ENCODE measurements at regions of chr12 and their contacts with region 1.

Region 1: DNA sequence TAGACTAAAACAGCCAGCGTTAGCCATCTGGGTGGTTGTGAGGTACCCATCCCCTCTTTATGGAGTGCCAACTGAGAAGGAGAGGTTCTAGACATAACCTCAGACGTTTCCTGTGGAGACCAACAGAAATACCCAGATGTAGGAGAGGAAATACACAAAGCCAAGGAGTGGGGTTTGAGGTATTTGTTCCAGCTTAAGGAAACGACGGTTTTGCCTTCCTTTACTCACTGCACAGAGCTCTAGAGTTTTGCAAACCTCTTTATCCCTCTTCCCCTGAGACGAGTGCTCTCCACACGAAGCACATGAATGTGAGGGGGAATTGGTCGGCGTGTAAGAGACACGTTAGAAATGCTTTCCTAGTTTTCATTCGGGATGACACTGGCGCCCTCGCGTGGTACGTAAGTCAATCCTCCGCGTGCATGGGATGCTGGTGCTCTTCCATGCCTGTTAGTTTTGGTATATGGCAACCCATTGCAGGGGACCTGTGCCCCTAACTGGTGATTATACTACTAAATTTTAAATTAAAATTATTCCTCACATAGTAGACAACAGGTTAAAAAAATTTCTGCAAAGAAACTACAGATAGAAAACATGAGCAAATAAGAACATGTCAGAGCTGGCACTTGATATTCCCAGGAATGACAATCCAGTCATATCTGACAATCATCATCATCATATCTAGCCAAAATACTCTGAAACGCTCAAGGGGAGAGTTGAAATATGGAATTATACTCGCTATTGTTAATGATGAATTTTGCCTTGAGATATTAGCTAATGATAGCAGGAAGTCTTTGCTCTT is 121.7 kb downstream of the PPM1H start:
- DNase-seq: peak; percentile 38
- H3K4me3 ChIP-seq: peak overlapping the region; percentile 2; the same call in 1 of the 2 replicates
- H3K27ac ChIP-seq: no peak overlapping the region
- H3K27me3 ChIP-seq: peaks cover 5% of the 10 kb centered on the region
- CTCF ChIP-seq: peak; percentile 84

Region 2: GRCh38 chr12:62581288-62582064 is 231.8 kb before region 1 on chr12:
- CTCF ChIA-PET with region 1: interaction called, 48 read pairs
- POLR2A ChIA-PET with region 1: no interaction called
- DNase-seq: peak; percentile 20
- H3K4me3 ChIP-seq: no peak overlapping the region
- H3K27ac ChIP-seq: no peak overlapping the region
- H3K27me3 ChIP-seq: no peaks in the 10 kb centered on the region
- CTCF ChIP-seq: peak; percentile 77

Region 3: DNA sequence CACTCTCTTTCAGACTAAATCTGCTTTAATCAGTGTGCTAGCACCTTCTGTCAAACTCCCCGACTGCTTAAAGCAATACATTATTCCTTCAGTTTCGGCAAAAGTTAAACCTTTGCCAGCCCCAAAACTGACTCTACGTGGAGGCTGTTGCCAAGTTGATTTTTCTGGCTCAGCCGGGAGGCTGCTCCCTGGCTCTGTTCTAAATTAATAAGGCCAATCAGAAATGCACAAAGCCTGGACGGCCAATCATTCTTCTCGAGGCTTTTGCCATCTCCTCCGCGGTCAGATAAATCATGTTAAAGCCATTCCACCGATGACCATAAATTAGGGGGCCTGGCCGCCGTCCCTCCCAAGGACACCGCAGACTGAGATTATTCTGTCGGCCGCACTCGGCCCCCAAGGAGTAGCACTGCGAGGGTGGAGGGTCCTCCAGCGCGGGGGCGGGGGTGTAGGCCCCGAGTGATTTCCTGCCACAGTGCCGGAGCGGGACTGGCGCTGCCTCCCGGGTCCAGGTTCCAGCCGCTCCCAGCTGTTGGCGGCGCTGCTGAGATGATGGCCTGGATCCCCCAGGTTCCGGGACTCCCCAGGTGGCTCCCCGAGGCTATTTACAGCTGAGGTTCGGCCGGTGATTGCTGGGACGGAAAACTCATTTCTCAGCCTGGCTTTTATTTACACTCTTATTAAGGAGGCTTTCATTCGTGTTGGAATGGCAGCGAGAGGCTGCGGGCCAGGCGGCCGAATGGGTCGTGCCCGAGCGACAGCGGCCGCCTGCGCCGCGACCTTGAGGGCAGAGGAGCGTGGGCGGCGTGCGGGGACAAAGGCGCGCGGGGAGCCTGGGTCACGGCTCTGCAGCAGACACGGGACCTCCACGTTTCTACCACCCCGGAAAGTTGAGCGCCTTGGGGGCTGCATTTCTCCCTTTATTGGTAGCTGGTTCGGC is 181.5 kb before region 1 on chr12:
- CTCF ChIA-PET with region 1: no interaction called
- POLR2A ChIA-PET with region 1: no interaction called
- DNase-seq: peak; percentile 21
- H3K4me3 ChIP-seq: peak overlapping the region; percentile 62
- H3K27ac ChIP-seq: no peak overlapping the region
- H3K27me3 ChIP-seq: peaks cover 2% of the 10 kb centered on the region
- CTCF ChIP-seq: peak; percentile 40

Region 4: GRCh38 chr12:62793256-62794217 is 19.7 kb before region 1 on chr12:
- CTCF ChIA-PET with region 1: interaction called, 26 read pairs
- POLR2A ChIA-PET with region 1: no interaction called
- DNase-seq: peak; percentile 66
- H3K4me3 ChIP-seq: no peak overlapping the region
- H3K27ac ChIP-seq: no peak overlapping the region
- H3K27me3 ChIP-seq: no peaks in the 10 kb centered on the region
- CTCF ChIP-seq: peak; percentile 96

Region 5: DNA sequence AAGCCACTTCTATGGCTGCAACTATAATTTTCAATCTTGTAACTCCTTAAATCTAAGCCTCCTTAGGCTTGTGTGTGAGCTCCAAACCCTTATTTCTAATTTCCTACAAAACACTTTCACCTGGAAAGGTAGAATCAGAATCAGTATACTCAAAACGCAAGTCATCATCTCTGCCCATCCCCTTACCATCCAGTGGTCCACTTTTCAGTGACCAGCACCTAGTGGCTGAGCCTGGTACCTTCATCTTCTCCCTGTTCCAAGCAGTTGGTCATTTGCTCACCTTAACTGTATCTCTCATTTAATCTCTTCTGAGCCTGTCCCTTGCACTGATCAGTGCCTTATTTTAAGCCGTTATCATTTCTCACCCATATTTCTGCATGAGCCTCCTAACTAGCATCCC is 13.8 kb after region 1 on chr12:
- CTCF ChIA-PET with region 1: interaction called, 13 read pairs
- POLR2A ChIA-PET with region 1: no interaction called
- DNase-seq: no peak
- H3K4me3 ChIP-seq: no peak overlapping the region
- H3K27ac ChIP-seq: no peak overlapping the region
- H3K27me3 ChIP-seq: peaks cover 8% of the 10 kb centered on the region
- CTCF ChIP-seq: peak; percentile 31

Region 6: GRCh38 chr12:62848421-62848820 is 35.2 kb after region 1 on chr12:
- CTCF ChIA-PET with region 1: interaction called, 13 read pairs
- POLR2A ChIA-PET with region 1: no interaction called
- DNase-seq: no peak
- H3K4me3 ChIP-seq: no peak overlapping the region
- H3K27ac ChIP-seq: peak overlapping the region; percentile 22
- H3K27me3 ChIP-seq: no peaks in the 10 kb centered on the region
- CTCF ChIP-seq: no peak

Region 7: GRCh38 chr12:63068857-63069442 is 255.7 kb after region 1 on chr12:
- CTCF ChIA-PET with region 1: interaction called, 57 read pairs
- POLR2A ChIA-PET with region 1: no interaction called
- DNase-seq: peak; percentile 34
- H3K4me3 ChIP-seq: no peak overlapping the region
- H3K27ac ChIP-seq: no peak overlapping the region
- H3K27me3 ChIP-seq: no peaks in the 10 kb centered on the region
- CTCF ChIP-seq: peak; percentile 64

Region 8: GRCh38 chr12:63228853-63229252 is 415.6 kb after region 1 on chr12:
- CTCF ChIA-PET with region 1: no interaction called
- POLR2A ChIA-PET with region 1: no interaction called
- DNase-seq: no peak
- H3K4me3 ChIP-seq: no peak overlapping the region
- H3K27ac ChIP-seq: no peak overlapping the region
- H3K27me3 ChIP-seq: no peaks in the 10 kb centered on the region
- CTCF ChIP-seq: no peak

Measured in AG04450 (cell line).